GM12878 (cell line): ENCODE measurements at regions of chr6 and their contacts with region 1.

Region 1: GRCh38 chr6:6840831-6841291 is 252.3 kb downstream of the LY86 start:
- DNase-seq: no peak
- ATAC-seq: peak; percentile 94
- H3K4me3 ChIP-seq: no peak overlapping the region
- H3K27ac ChIP-seq: no peak overlapping the region
- H3K4me1 ChIP-seq: peaks cover 9% of the 10 kb centered on the region
- H3K27me3 ChIP-seq: no peaks in the 10 kb centered on the region
- CTCF ChIP-seq: no peak
- EP300 ChIP-seq: peak in 1 of 2 experiments; percentile 67; a peak in 2 of 4 replicates
- POLR2A ChIP-seq: no peak
- RAD21 ChIP-seq: no peak

Region 2: DNA sequence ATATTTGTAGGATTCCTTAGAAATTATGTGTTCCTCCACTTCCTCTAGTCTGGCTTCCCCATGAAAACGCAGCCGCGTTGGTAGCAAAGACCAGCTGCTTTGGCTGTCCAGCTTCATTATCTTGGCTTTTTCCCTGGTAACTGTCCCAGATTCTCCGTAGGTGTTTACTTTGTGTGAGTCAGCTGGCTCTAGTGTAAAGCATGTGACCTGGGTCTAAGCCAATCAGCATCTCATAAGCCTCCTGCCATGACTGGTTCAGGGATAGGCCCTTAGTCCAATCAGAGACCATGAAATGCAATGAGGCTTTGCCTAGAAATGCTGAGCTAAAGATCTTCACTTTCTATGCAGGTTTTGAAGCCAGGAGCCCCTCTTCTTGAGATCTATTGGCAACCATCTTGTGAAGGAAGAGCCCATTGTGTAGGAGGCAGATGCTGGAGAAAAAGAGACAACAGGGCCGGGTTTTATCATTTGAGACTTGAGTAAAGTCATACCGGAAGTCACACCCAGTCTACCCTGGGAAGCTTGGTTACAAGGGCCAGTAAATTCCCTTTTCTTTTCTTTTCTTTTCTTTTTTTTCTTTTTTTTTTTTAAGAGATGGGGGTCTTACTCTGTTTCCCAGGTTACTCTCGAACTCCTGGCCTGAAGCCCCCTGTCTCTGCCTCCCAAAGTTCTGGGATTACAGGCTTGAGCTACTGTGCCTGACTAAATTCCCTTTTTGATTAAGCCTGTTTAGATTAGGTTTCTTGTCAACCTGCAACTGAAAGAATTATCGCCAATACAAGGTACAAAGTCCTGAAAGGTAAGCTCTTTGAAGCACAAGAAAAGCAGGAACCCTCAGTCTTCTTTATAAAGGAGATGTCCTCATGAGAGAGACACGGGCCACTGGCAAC is 10.4 kb after region 1 on chr6:
- CTCF ChIA-PET with region 1: interaction called, 5 read pairs
- POLR2A ChIA-PET with region 1: no interaction called
- RAD21 ChIA-PET with region 1: interaction called, 4 read pairs
- SMC1A ChIA-PET with region 1: interaction called, 10 read pairs
- in situ Hi-C with region 1: no loop called
- intact Hi-C with region 1: no loop called
- DNase-seq: no peak
- ATAC-seq: peak; percentile 44; the same call in 2 of the 3 replicates
- H3K4me3 ChIP-seq: no peak overlapping the region
- H3K27ac ChIP-seq: no peak overlapping the region
- H3K4me1 ChIP-seq: peaks cover 4% of the 10 kb centered on the region
- H3K27me3 ChIP-seq: no peaks in the 10 kb centered on the region
- CTCF ChIP-seq: no peak
- EP300 ChIP-seq: no peak
- POLR2A ChIP-seq: no peak
- RAD21 ChIP-seq: no peak